PC-9 (cell line): ENCODE measurements at regions of chr4 and their contacts with region 1.

Region 1: DNA sequence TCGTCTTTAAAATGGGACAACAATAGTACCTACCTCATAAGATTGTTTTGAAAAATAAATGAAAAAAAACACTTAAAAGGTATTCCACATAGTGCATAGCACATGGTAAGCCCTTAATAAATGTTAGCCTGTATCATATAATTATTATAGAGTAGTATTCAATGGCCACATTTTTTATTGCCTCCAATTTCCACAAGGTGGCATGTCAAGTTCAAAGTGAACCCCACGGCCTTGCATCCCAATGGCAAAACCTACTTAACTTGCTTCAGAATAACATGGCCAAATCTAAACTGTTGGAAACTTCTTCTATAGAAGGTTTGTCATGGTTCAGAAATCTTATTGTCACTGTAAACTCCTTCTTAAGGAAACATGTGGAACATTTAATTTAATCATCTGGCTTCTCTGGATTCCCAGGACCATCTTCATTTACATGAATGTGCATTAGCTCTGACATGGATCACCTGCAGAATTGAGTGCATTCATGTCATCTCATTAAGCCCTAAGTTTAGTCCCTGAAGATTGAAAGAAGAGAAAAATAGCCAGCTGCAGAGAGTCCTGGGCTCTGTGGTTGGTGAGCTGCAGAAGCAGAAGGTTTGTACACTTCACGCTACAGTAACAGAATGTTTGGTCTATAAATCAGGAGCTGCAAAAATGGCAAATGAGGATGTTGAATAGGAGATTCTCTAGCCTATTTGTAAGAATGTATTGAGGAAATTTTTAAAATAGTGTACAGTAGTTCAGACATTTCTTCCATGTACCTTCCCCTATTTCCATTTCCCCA is 61.0 kb downstream of the ANXA3 start:
- DNase-seq: peak in 1 of 2 experiments; percentile 14
- H3K4me3 ChIP-seq: no peak overlapping the region
- H3K27ac ChIP-seq: no peak overlapping the region
- H3K4me1 ChIP-seq: no peaks in the 10 kb centered on the region
- H3K27me3 ChIP-seq: no peaks in the 10 kb centered on the region
- CTCF ChIP-seq: peak; percentile 70

Region 2: GRCh38 chr4:78667764-78668163 is 55.2 kb after region 1 on chr4:
- CTCF ChIA-PET with region 1: no interaction called
- POLR2A ChIA-PET with region 1: no interaction called
- intact Hi-C with region 1: loop called (anchors 2 kb)
- DNase-seq: no peak
- H3K4me3 ChIP-seq: no peak overlapping the region
- H3K27ac ChIP-seq: no peak overlapping the region
- H3K4me1 ChIP-seq: no peaks in the 10 kb centered on the region; the same call in 1 of the 2 replicates
- H3K27me3 ChIP-seq: no peaks in the 10 kb centered on the region
- CTCF ChIP-seq: no peak

Region 3: DNA sequence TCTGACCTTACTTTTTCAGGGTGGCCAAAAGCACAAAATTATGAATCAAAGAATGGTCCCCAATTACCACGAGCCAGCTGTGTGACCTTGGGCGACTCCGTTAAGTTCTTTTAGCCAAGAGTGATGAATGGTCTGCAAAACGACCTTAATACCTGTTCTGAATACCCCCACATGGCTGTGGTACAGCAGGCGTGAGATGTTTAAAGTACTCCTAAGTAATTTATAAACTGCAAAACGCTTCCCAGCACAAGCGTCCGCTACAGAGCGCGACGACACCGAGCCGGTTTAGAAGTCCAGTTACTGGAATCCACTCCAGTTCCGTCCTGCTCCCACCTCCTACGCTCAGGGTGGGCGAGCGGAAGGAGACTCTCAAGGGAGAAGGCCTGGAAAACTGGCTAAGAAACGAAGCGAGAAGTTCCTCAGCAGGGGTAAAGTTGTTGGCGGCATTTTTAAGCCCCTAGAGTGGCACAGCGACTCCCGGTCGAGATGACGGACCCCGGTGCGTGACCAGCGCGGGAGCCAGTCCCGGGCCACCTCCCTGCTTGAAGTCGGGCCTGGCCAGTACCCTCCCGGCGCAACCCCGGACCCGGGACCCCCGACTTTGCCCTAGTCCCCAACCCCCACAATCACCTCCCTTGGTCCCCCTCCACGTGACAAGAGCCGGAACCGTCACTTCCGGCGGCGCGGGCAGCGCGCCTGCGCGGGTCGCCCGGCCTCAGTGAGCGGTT is 162.9 kb after region 1 on chr4:
- CTCF ChIA-PET with region 1: no interaction called
- POLR2A ChIA-PET with region 1: no interaction called
- intact Hi-C with region 1: loop called (anchors 5 kb)
- DNase-seq: peak in 1 of 2 experiments; percentile 70
- H3K4me3 ChIP-seq: peak overlapping the region; percentile 78
- H3K27ac ChIP-seq: peak overlapping the region; percentile 74
- H3K4me1 ChIP-seq: peaks cover 14% of the 10 kb centered on the region
- H3K27me3 ChIP-seq: no peaks in the 10 kb centered on the region
- CTCF ChIP-seq: no peak

Region 4: GRCh38 chr4:78864405-78865024 is 251.9 kb after region 1 on chr4:
- CTCF ChIA-PET with region 1: no interaction called
- POLR2A ChIA-PET with region 1: no interaction called
- intact Hi-C with region 1: loop called (anchors 1 kb)
- DNase-seq: peak in 1 of 2 experiments; percentile 59
- H3K4me3 ChIP-seq: no peak overlapping the region
- H3K27ac ChIP-seq: no peak overlapping the region
- H3K4me1 ChIP-seq: no peaks in the 10 kb centered on the region
- H3K27me3 ChIP-seq: no peaks in the 10 kb centered on the region
- CTCF ChIP-seq: peak; percentile 72

Region 5: GRCh38 chr4:79065262-79065661 is 452.7 kb after region 1 on chr4:
- CTCF ChIA-PET with region 1: no interaction called
- POLR2A ChIA-PET with region 1: no interaction called
- intact Hi-C with region 1: no loop called
- DNase-seq: no peak
- H3K4me3 ChIP-seq: no peak overlapping the region
- H3K27ac ChIP-seq: no peak overlapping the region
- H3K4me1 ChIP-seq: no peaks in the 10 kb centered on the region
- H3K27me3 ChIP-seq: no peaks in the 10 kb centered on the region
- CTCF ChIP-seq: no peak